Left colon (tissue), 2 donors: ENCODE measurements at regions of chr3 and their contacts with region 1.

Region 1: GRCh38 chr3:141105828-141106628 is 54.9 kb downstream of the SPSB4 start:
- DNase-seq: peak; percentile 49 to 78
- ATAC-seq: peak; percentile 41

Region 2: GRCh38 chr3:140794507-140794906 is 311.5 kb before region 1 on chr3:
- intact Hi-C with region 1: no loop called
- DNase-seq: no peak
- ATAC-seq: no peak

Region 3: GRCh38 chr3:141011232-141011996 is 94.6 kb before region 1 on chr3:
- intact Hi-C with region 1: loop called in 1 of 2 experiments (anchors 5 kb)
- DNase-seq: peak; percentile 45 to 76
- ATAC-seq: peak; percentile 49

Region 4: GRCh38 chr3:141336672-141337522 is 230.9 kb after region 1 on chr3:
- intact Hi-C with region 1: no loop called
- DNase-seq: no peak
- ATAC-seq: no peak